B cell (primary cell): ENCODE measurements at regions of chr3 and their contacts with region 1.

Region 1: GRCh38 chr3:179015551-179016020 is 56.0 kb downstream of the ZMAT3 start:
- DNase-seq: peak; percentile 87
- ATAC-seq: peak; percentile 83
- H3K4me3 ChIP-seq: no peak overlapping the region
- H3K4me3 Mint-ChIP-seq: peak overlapping the region; percentile 41
- H3K27ac ChIP-seq: peak overlapping the region in 1 of 2 donors; percentile 81
- H3K27ac Mint-ChIP-seq: peak overlapping the region; percentile 75
- H3K4me1 ChIP-seq: peaks cover 16 to 34% of the 10 kb centered on the region in 2 donors
- H3K4me1 Mint-ChIP-seq: peaks cover 50% of the 10 kb centered on the region
- H3K27me3 ChIP-seq: no peaks in the 10 kb centered on the region
- H3K27me3 Mint-ChIP-seq: no peaks in the 10 kb centered on the region
- CTCF ChIP-seq: peak; percentile 94

Region 2: GRCh38 chr3:178419071-178419470 is 596.5 kb before region 1 on chr3:
- CTCF ChIA-PET with region 1: no interaction called
- POLR2A ChIA-PET with region 1: no interaction called
- intact Hi-C with region 1: no loop called
- DNase-seq: no peak
- ATAC-seq: no peak
- H3K4me3 ChIP-seq: no peak overlapping the region
- H3K4me3 Mint-ChIP-seq: no peak overlapping the region
- H3K27ac ChIP-seq: no peak overlapping the region
- H3K27ac Mint-ChIP-seq: no peak overlapping the region
- H3K4me1 ChIP-seq: no peaks in the 10 kb centered on the region
- H3K4me1 Mint-ChIP-seq: no peaks in the 10 kb centered on the region
- H3K27me3 ChIP-seq: no peaks in the 10 kb centered on the region
- H3K27me3 Mint-ChIP-seq: peaks cover 6% of the 10 kb centered on the region
- CTCF ChIP-seq: no peak

Region 3: DNA sequence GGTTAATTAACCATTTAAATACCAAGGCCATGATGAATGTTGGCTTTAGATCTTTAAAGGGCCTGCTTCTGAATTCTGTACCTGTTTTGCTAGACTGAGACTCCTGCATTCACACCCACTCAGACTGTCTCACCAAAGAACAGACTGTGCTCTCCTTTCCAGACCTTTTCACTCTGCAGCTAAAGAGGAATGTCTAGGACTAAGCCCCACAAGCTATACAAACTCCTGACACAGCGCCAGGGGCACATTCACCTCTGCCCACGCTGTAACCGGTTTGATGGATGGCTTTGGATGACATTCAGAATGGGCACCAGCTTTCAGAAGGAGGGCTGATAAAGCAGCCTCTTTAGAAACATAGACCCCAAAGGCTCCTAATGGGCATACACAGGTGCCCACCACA is 279.3 kb before region 1 on chr3:
- CTCF ChIA-PET with region 1: no interaction called
- POLR2A ChIA-PET with region 1: no interaction called
- intact Hi-C with region 1: no loop called
- DNase-seq: no peak
- ATAC-seq: no peak
- H3K4me3 ChIP-seq: no peak overlapping the region
- H3K4me3 Mint-ChIP-seq: no peak overlapping the region
- H3K27ac ChIP-seq: no peak overlapping the region
- H3K27ac Mint-ChIP-seq: no peak overlapping the region
- H3K4me1 ChIP-seq: no peaks in the 10 kb centered on the region
- H3K4me1 Mint-ChIP-seq: no peaks in the 10 kb centered on the region
- H3K27me3 ChIP-seq: no peaks in the 10 kb centered on the region
- H3K27me3 Mint-ChIP-seq: no peaks in the 10 kb centered on the region
- CTCF ChIP-seq: no peak

Region 4: GRCh38 chr3:178768072-178768864 is 247.3 kb before region 1 on chr3:
- CTCF ChIA-PET with region 1: no interaction called
- POLR2A ChIA-PET with region 1: no interaction called
- intact Hi-C with region 1: no loop called
- DNase-seq: no peak
- ATAC-seq: no peak
- H3K4me3 ChIP-seq: no peak overlapping the region
- H3K4me3 Mint-ChIP-seq: no peak overlapping the region
- H3K27ac ChIP-seq: no peak overlapping the region
- H3K27ac Mint-ChIP-seq: no peak overlapping the region
- H3K4me1 ChIP-seq: no peaks in the 10 kb centered on the region
- H3K4me1 Mint-ChIP-seq: no peaks in the 10 kb centered on the region
- H3K27me3 ChIP-seq: no peaks in the 10 kb centered on the region
- H3K27me3 Mint-ChIP-seq: peaks cover 6% of the 10 kb centered on the region
- CTCF ChIP-seq: no peak

Region 5: DNA sequence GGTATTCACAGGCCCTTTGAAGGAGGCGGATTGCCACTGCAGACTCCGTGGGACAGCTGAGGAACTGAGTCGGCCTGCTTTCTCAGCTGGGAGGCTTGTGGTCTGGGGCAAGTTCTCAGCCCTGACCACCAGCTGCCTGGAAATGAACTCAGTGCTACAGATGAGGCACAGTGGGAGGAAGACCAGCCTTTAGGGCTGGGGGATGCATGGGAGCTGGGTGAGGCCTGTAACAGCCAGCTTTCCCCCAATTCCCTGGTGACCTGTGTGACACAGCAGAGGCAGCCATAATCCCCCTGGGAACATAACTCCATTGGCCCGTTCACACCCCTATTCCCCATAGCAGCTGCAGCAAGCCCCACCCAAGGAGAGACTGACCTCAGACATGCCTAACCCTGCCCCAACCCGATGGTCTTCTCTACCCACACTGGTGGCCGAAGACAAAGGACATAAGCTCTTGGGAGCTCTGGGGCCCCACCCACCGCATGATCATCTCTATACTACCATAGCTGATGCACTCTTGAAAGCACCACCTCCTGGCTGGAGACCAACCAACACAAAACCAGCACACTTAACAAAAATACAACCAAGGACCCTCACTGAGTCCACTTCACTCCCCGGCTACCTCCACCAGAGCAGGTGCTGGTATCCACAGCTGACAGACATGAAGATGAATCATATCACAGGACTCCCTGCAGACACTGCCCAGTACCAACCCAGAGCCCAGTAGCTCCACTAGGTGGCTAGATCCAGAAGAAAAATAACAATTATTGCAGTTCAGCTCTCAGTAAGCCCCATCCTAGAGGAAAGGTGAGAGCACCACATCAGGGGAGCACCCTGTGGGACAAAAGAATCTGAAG is 31.1 kb after region 1 on chr3:
- CTCF ChIA-PET with region 1: interaction called, 6 read pairs
- POLR2A ChIA-PET with region 1: no interaction called
- intact Hi-C with region 1: loop called (anchors 1 kb)
- DNase-seq: peak; percentile 54
- ATAC-seq: peak; percentile 85
- H3K4me3 ChIP-seq: no peak overlapping the region
- H3K4me3 Mint-ChIP-seq: peak overlapping the region; percentile 78
- H3K27ac ChIP-seq: peak overlapping the region; percentile 22 to 51
- H3K27ac Mint-ChIP-seq: peak overlapping the region; percentile 78
- H3K4me1 ChIP-seq: peaks cover 18 to 20% of the 10 kb centered on the region in 2 donors
- H3K4me1 Mint-ChIP-seq: peaks cover 53% of the 10 kb centered on the region
- H3K27me3 ChIP-seq: no peaks in the 10 kb centered on the region
- H3K27me3 Mint-ChIP-seq: no peaks in the 10 kb centered on the region
- CTCF ChIP-seq: no peak

Region 6: DNA sequence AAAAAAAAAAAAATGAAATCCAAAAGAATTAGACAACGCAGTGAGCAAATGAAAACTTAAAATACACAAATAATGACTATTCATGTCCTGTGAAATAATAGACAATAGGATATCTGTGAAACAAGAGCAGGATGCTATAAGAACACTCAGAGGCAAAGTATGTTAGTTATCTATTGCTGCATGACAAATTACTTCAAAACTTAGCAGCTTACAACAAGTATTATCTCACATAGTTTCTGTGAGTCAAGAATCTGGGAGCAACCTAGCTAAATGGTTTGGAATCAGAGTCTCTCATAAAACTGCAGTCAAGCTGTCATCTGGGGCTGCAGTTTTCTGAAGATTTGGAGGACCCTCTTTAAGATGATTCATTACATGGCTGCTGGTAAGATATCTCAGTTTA is 92.5 kb after region 1 on chr3:
- CTCF ChIA-PET with region 1: interaction called, 30 read pairs
- POLR2A ChIA-PET with region 1: no interaction called
- intact Hi-C with region 1: loop called (anchors 1 kb)
- DNase-seq: no peak
- ATAC-seq: no peak
- H3K4me3 ChIP-seq: no peak overlapping the region
- H3K4me3 Mint-ChIP-seq: no peak overlapping the region
- H3K27ac ChIP-seq: no peak overlapping the region
- H3K27ac Mint-ChIP-seq: no peak overlapping the region
- H3K4me1 ChIP-seq: no peaks in the 10 kb centered on the region
- H3K4me1 Mint-ChIP-seq: no peaks in the 10 kb centered on the region
- H3K27me3 ChIP-seq: peaks cover 0 to 3% (median 0%) of the 10 kb centered on the region in 4 experiments
- H3K27me3 Mint-ChIP-seq: peaks cover 23% of the 10 kb centered on the region
- CTCF ChIP-seq: no peak

Region 7: DNA sequence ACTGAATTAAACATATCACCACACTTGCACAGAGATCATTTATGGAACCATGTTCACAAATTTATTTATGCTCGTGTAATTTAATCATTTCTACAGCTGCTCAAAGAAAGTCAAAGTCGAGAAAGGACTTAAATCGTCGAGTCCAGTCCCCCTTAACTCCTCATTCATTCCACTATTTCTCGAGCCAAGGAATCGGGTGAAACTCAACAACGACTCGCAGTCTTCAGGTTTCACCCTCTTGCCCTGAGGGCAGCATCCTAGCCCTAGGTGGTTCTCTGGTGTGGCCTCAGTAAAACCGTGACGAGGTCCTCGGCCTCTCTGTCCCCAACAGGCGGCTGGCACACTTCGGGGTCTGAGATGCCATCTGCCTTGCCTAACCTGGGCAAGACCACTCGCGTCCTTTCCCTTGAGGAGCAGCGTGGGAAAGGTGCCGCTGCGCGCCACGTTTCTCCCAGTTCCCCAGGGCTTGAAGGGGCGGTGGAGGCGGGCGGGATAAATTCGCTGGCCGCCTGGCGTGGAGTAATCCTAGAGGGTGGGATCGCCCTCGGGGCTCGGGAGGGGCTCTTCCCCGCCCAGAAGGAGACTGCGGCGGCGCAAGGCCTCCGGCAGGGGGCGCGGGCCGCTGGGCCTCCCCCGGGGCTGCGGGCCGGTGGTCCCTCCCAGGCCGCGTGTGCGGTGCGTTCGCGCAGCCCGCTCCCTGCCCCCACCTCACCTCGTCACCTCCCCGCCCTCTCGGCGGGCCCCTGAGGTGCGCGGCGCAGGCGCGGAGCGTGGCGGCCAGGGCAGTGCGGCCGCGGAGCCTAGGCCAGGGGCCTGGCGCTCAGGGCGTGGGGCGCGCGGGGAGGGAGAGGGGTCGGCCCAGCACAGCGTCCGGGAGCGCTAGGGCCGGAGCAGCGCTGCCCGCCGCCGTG is 307.0 kb after region 1 on chr3 and contains the start of gene ZNF639:
- CTCF ChIA-PET with region 1: interaction called, 122 read pairs
- POLR2A ChIA-PET with region 1: no interaction called
- intact Hi-C with region 1: loop called (anchors 1 kb)
- DNase-seq: peak; percentile 93
- ATAC-seq: peak; percentile 84
- H3K4me3 ChIP-seq: peak within 1 kb of the TSS; percentile 85 to 97 (median 92)
- H3K4me3 Mint-ChIP-seq: peak within 1 kb of the TSS; percentile 96
- H3K27ac ChIP-seq: peak within 1 kb of the TSS; percentile 89 to 99
- H3K27ac Mint-ChIP-seq: peak within 1 kb of the TSS; percentile 95
- H3K4me1 ChIP-seq: peaks cover 25% of the 10 kb centered on the region in 2 donors
- H3K4me1 Mint-ChIP-seq: peaks cover 30% of the 10 kb centered on the region
- H3K27me3 ChIP-seq: no peaks in the 10 kb centered on the region
- H3K27me3 Mint-ChIP-seq: no peaks in the 10 kb centered on the region
- CTCF ChIP-seq: peak; percentile 87
- total RNA-seq, gene ZNF639: 39.8 and 43.1 TPM in 2 replicates

Region 8: GRCh38 chr3:179562591-179563270 is 547.1 kb after region 1 on chr3 and contains the start of gene ACTL6A:
- CTCF ChIA-PET with region 1: interaction called, 3 read pairs
- POLR2A ChIA-PET with region 1: no interaction called
- intact Hi-C with region 1: loop called (anchors 1 kb)
- DNase-seq: peak; percentile 98
- ATAC-seq: peak; percentile 90
- H3K4me3 ChIP-seq: peak within 1 kb of the TSS; percentile 55 to 87 (median 83)
- H3K4me3 Mint-ChIP-seq: peak within 1 kb of the TSS; percentile 98
- H3K27ac ChIP-seq: peak within 1 kb of the TSS; percentile 58 to 73
- H3K27ac Mint-ChIP-seq: peak within 1 kb of the TSS; percentile 94
- H3K4me1 ChIP-seq: peaks cover 9% of the 10 kb centered on the region in 2 donors
- H3K4me1 Mint-ChIP-seq: peaks cover 26% of the 10 kb centered on the region
- H3K27me3 ChIP-seq: no peaks in the 10 kb centered on the region
- H3K27me3 Mint-ChIP-seq: no peaks in the 10 kb centered on the region
- CTCF ChIP-seq: no peak
- total RNA-seq, gene ACTL6A: 48.5 and 55.1 TPM in 2 replicates

Region 9: GRCh38 chr3:179942553-179943075 is 927.0 kb after region 1 on chr3:
- CTCF ChIA-PET with region 1: no interaction called
- POLR2A ChIA-PET with region 1: no interaction called
- intact Hi-C with region 1: no loop called
- DNase-seq: no peak
- ATAC-seq: no peak
- H3K4me3 ChIP-seq: no peak overlapping the region
- H3K4me3 Mint-ChIP-seq: no peak overlapping the region
- H3K27ac ChIP-seq: no peak overlapping the region
- H3K27ac Mint-ChIP-seq: no peak overlapping the region
- H3K4me1 ChIP-seq: no peaks in the 10 kb centered on the region
- H3K4me1 Mint-ChIP-seq: no peaks in the 10 kb centered on the region
- H3K27me3 ChIP-seq: peaks cover 0 to 13% (median 5%) of the 10 kb centered on the region in 4 experiments
- H3K27me3 Mint-ChIP-seq: peaks cover 48% of the 10 kb centered on the region
- CTCF ChIP-seq: no peak